ENCODE measurements at regions of chr9 and their contacts with region 1.

Region 1: GRCh38 chr9:69976152-69976551 is 67.5 kb upstream of the MAMDC2 start:
- DNase-seq: no peak

Region 2: DNA sequence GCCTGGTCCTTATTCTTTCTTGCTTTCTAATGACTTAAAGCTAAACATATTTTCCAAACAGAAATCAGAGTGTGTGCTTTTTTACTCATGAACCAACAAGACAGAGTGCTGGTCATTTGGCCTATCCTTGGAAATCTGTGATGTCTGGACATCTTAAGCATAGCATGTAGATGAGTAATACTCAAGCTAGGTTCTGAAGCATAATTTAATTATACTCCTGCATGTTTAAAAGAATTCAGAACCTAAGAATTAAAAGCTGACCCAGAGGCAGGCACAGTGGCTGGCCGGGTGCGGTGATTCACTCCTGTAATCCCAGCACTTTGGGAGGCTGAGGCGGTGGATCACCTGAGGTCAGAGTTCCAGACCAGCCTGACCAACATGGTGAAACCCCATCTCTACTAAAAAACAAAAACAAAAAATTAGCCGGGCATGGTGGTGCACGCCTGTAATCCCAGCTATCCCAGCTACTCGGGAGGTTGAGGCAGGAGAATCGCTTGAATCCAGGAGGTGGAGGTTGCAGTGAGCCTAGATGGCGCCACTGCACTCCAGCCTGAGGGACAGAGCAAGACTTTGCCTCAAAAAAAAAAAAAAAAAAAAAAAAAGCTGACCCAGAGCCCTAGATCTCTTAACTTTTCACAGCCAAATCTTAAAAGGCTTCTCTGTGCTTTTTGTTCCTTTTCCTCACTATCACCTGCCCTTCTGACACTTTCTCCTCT is 818.2 kb before region 1 on chr9:
- in situ Hi-C with region 1: no loop called
- DNase-seq: peak; percentile 29

Region 3: GRCh38 chr9:69582544-69583297 is 393.4 kb before region 1 on chr9:
- in situ Hi-C with region 1: no loop called
- DNase-seq: peak; percentile 8

Region 4: GRCh38 chr9:70602321-70603019 is 626.3 kb after region 1 on chr9:
- in situ Hi-C with region 1: loop called (anchors 25 kb)
- DNase-seq: peak; percentile 84

Measured in KBM-7 (cell line).